Cardiac septum (tissue), 1 donor: ENCODE measurements at regions of chr12 and their contacts with region 1.

Region 1: GRCh38 chr12:124680863-124681778 is 113.7 kb upstream of the NCOR2 start:
- DNase-seq: no peak

Region 2: DNA sequence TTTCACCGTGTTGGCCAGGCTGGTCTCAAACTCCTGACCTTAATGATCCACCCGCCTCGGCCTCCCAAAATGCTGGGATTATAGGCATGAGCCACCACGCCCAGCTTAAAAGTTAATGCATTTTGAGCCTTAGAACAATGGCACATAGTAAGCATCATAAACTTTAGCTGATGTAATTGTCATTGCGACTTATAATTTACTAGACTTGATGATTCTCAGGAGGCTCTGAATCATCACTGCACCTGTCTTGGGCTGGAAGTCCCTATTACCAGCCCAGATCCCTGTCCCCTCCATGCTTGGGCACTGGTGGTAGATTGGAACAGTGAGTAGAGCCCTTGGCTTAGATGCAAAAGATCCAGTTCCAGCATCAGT is 1271.1 kb before region 1 on chr12:
- intact Hi-C with region 1: no loop called
- DNase-seq: no peak

Region 3: GRCh38 chr12:124379938-124380754 is 301.0 kb before region 1 on chr12:
- intact Hi-C with region 1: loop called (anchors 5 kb)
- DNase-seq: no peak

Region 4: GRCh38 chr12:124655698-124656516 is 25.2 kb before region 1 on chr12:
- intact Hi-C with region 1: loop called (anchors 2 kb)
- DNase-seq: peak; percentile 89

Region 5: GRCh38 chr12:124740691-124741137 is 59.6 kb after region 1 on chr12:
- intact Hi-C with region 1: loop called (anchors 5 kb)
- DNase-seq: no peak